ENCODE measurements at regions of chr9 and their contacts with region 1.

Region 1: DNA sequence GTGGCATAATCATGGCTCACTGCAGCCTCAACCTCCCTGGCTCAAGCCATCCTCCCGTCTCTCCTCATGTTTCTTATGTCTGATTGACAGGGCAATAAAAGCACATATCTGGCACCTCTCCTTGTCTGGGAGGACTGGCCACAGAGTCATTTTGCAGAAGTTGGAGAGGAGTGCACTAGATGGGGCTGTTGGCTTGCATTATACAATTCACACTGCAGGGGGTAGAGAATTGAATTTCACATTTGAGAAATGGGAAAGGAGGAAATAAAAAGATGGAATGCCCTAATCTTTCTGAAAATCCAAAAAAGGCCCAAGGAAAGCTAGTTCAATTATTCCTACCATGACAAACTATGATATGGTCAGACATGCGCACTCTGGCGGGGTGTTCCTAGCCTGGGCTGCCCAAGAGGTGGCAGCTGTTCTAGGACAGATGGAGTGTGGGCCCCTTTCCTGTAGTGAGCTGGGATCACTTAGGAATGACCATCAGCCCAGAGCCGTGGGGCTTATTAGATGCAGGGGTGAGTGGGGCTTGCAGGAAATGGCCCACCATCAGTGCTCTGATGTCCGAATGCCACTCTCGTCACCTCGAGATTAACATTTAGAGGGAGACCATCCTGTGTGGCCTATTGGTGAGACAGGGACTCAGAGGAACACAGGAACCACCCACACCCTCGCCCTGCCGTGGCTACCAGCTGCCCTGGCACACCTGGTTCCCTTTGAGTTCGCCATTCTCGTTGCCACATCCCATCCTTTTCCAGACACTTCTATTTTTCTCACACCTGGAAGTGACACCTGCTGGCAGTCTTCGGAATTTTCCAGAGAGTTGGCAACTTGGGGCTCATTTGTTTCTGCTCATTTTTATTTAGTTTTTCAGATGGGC is 21.8 kb upstream of the ANKRD18A start:
- DNase-seq: peak; percentile 53 to 68
- ATAC-seq: peak; percentile 92 to 93
- H3K4me3 ChIP-seq: no peak overlapping the region
- H3K27ac ChIP-seq: peak overlapping the region; percentile 9 to 31; a peak in 1 of 6 replicates
- H3K4me1 ChIP-seq: peaks cover 5% of the 10 kb centered on the region; the same call in 2 of the 3 replicates
- CTCF ChIP-seq: peak; percentile 62; the same call in 2 of the 3 replicates
- EP300 ChIP-seq: no peak
- POLR2A ChIP-seq: no peak
- RAD21 ChIP-seq: peak; percentile 86 to 89

Region 2: GRCh38 chr9:38284588-38285051 is 357.6 kb before region 1 on chr9:
- CTCF ChIA-PET with region 1: no interaction called
- POLR2A ChIA-PET with region 1: no interaction called
- DNase-seq: no peak
- ATAC-seq: no peak
- H3K4me3 ChIP-seq: no peak overlapping the region
- H3K27ac ChIP-seq: no peak overlapping the region
- H3K4me1 ChIP-seq: no peaks in the 10 kb centered on the region
- CTCF ChIP-seq: no peak
- EP300 ChIP-seq: no peak
- POLR2A ChIP-seq: no peak
- RAD21 ChIP-seq: no peak

Region 3: GRCh38 chr9:38346811-38347210 is 295.4 kb before region 1 on chr9:
- CTCF ChIA-PET with region 1: no interaction called
- POLR2A ChIA-PET with region 1: no interaction called
- DNase-seq: no peak
- ATAC-seq: no peak
- H3K4me3 ChIP-seq: no peak overlapping the region
- H3K27ac ChIP-seq: no peak overlapping the region
- H3K4me1 ChIP-seq: no peaks in the 10 kb centered on the region
- CTCF ChIP-seq: no peak
- EP300 ChIP-seq: no peak
- POLR2A ChIP-seq: no peak
- RAD21 ChIP-seq: no peak

Region 4: GRCh38 chr9:38620483-38621433 is 21.5 kb before region 1 on chr9 and contains the start of gene ANKRD18A:
- CTCF ChIA-PET with region 1: interaction called, 30 read pairs
- POLR2A ChIA-PET with region 1: no interaction called
- DNase-seq: peak; percentile 73 to 96
- ATAC-seq: peak; percentile 83 to 89
- H3K4me3 ChIP-seq: peak within 1 kb of the TSS; percentile 53
- H3K27ac ChIP-seq: peak within 1 kb of the TSS; percentile 93
- H3K4me1 ChIP-seq: peaks cover 9% of the 10 kb centered on the region; the same call in 2 of the 3 replicates
- CTCF ChIP-seq: peak; percentile 74
- EP300 ChIP-seq: no peak
- POLR2A ChIP-seq: peak; percentile 51
- RAD21 ChIP-seq: peak; percentile 65 to 79
- polyA plus RNA-seq, gene ANKRD18A: 15.9 and 20.7 TPM in 2 replicates

Region 5: DNA sequence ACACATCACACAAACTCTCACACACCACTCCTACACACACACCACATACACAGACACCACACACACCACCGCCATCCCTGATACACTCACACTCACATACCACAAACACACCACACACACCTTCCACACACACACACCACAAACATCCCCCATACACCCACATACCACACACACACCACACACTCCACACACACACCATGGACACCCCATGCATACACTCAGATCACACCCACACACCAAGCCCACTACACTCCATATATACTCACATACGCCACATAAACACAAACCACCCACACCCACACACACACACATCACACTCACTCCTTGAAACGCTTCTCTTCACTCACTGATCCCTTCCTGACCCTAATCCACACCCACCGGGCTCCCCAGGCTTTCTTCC is 12.7 kb before region 1 on chr9:
- CTCF ChIA-PET with region 1: interaction called, 31 read pairs
- POLR2A ChIA-PET with region 1: no interaction called
- DNase-seq: no peak
- ATAC-seq: no peak
- H3K4me3 ChIP-seq: no peak overlapping the region
- H3K27ac ChIP-seq: no peak overlapping the region
- H3K4me1 ChIP-seq: no peaks in the 10 kb centered on the region
- CTCF ChIP-seq: no peak
- EP300 ChIP-seq: no peak
- POLR2A ChIP-seq: no peak
- RAD21 ChIP-seq: no peak

Region 6: DNA sequence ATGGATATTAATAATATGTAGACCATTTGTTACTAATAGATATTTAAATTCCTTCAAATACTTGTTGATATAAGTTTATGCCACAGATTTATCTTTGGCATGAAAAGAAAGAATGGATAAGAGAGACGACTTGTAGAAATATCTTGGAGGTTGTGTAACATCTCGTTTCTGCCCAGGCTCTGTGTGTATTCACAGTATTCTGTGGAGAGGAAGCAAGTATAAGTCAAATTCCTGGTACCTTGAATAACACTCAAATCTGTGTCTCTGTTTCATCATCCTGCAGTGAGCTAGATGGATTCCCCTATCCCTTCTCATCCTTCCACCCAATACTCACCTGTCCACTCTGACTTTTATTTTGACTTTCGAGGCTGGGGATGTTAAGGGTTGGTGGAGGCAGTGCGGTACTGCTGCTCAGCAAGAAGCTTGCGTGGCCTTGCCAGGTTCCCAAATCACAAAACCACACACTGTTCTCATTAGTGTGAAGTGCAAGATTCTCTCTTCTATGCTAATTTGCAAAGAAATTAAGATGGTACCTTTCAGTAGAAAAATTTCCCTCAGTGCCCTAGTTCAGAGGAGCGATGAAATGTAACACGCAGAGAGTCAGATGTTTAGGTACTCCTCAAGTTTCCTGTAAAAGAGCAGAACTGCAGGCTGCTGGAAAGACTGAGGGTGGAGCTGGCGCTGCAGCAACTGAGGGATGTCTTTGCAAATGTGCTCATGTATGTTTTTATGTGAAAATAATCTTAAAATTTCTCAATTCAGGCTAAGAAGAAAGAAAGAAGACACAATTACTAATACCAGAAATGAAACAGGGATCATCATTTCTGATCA is 20.8 kb after region 1 on chr9:
- CTCF ChIA-PET with region 1: interaction called, 12 read pairs
- POLR2A ChIA-PET with region 1: no interaction called
- DNase-seq: peak in 1 of 2 experiments; percentile 46
- ATAC-seq: peak; percentile 54 to 73; a peak in 3 of 6 replicates
- H3K4me3 ChIP-seq: no peak overlapping the region
- H3K27ac ChIP-seq: no peak overlapping the region
- H3K4me1 ChIP-seq: no peaks in the 10 kb centered on the region
- CTCF ChIP-seq: peak; percentile 52
- EP300 ChIP-seq: no peak
- POLR2A ChIP-seq: no peak
- RAD21 ChIP-seq: peak; percentile 75

Region 7: DNA sequence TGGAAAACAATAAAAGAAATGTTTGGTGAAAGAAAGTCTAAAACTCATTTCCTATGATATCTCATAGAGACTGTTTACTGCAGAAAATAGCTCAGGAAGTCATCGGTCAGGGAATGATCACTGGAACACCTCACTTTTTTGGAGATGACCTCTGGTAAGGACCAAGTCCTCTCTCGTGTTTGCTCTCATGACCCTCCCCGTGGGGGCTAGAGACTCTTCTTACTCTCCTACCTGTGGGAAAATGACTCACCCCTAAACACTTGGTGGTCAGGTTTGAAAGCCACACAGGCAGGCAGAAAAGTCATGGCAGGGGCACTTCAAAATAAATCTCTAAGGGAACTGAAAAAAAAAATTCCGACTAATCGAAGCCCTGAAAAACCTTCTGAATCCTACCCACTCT is 29.5 kb after region 1 on chr9:
- CTCF ChIA-PET with region 1: interaction called, 13 read pairs
- POLR2A ChIA-PET with region 1: no interaction called
- DNase-seq: no peak
- ATAC-seq: no peak
- H3K4me3 ChIP-seq: peak overlapping the region; percentile 28; the same call in 2 of the 3 replicates
- H3K27ac ChIP-seq: peak overlapping the region; percentile 73 to 75
- H3K4me1 ChIP-seq: peaks cover 18% of the 10 kb centered on the region
- CTCF ChIP-seq: no peak
- EP300 ChIP-seq: no peak
- POLR2A ChIP-seq: no peak
- RAD21 ChIP-seq: no peak

Region 8: GRCh38 chr9:38707885-38708637 is 65.8 kb after region 1 on chr9:
- CTCF ChIA-PET with region 1: interaction called, 28 read pairs
- POLR2A ChIA-PET with region 1: no interaction called
- DNase-seq: peak in 1 of 2 experiments; percentile 57
- ATAC-seq: peak; percentile 71 to 90; a peak in 5 of 6 replicates
- H3K4me3 ChIP-seq: no peak overlapping the region
- H3K27ac ChIP-seq: no peak overlapping the region
- H3K4me1 ChIP-seq: peaks cover 5% of the 10 kb centered on the region; the same call in 2 of the 3 replicates
- CTCF ChIP-seq: peak; percentile 39
- EP300 ChIP-seq: no peak
- POLR2A ChIP-seq: no peak
- RAD21 ChIP-seq: peak; percentile 50 to 72; a peak in 4 of 5 replicates

Measured in A549 (cell line).